ENCODE measurements at regions of chr5 and their contacts with region 1.

Region 1: GRCh38 chr5:75668977-75669689 is 48.1 kb downstream of the POC5 start:
- DNase-seq: peak; percentile 95
- H3K4me3 ChIP-seq: peak overlapping the region in 1 of 3 experiments; percentile 38
- H3K27ac ChIP-seq: peak overlapping the region; percentile 71
- H3K4me1 ChIP-seq: peaks cover 23% of the 10 kb centered on the region
- H3K27me3 ChIP-seq: no peaks in the 10 kb centered on the region
- CTCF ChIP-seq: no peak
- POLR2A ChIP-seq: peak; percentile 57

Region 2: GRCh38 chr5:75611311-75612225 is 57.6 kb before region 1 on chr5 and contains the start of gene ANKDD1B:
- CTCF ChIA-PET with region 1: interaction called, 3 read pairs
- POLR2A ChIA-PET with region 1: no interaction called
- dilution Hi-C with region 1: no loop called
- intact Hi-C with region 1: loop called (anchors 2 kb)
- DNase-seq: peak; percentile 60
- H3K4me3 ChIP-seq: peak within 1 kb of the TSS; percentile 53 to 83 (median 70)
- H3K27ac ChIP-seq: peak within 1 kb of the TSS; percentile 13
- H3K4me1 ChIP-seq: peaks cover 11% of the 10 kb centered on the region
- H3K27me3 ChIP-seq: no peaks in the 10 kb centered on the region
- CTCF ChIP-seq: no peak
- POLR2A ChIP-seq: no peak
- total RNA-seq, gene ANKDD1B: 0.65 and 0.71 TPM in 2 replicates